SK-N-SH (cell line): ENCODE measurements at regions of chr1 and their contacts with region 1.

Region 1: DNA sequence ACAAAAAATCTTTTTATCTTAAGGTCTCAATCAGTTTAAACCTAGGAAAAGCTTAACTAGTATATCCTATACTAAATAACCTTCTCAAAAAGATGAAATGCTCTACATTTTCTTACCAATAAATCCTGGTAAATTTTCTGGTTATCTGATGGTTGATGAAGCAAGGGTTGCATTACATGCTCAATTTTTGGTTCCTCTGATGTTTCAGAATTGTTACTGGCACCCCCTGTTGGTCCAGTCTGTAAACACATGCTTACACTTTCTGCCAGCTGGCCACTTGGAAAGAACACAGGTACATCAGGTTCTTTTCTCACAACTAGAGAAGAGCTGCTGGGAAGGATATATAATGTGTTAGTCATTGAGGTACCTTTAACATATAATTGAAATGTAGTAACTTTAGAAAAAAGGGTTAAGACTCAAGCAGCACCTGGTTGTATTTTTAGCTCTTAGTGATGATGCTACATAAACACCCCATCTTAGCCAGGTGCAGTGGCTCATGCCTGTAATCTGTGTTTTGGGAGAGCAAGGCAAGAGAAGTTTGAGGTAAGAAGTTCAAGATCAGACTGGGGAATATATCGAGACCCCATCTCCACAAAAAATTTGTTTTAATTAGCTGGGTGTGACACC is 30.9 kb upstream of the TAL1 start:
- DNase-seq: peak; percentile 55
- H3K4me3 ChIP-seq: peak overlapping the region in 1 of 2 experiments; percentile 23; a peak in 1 of 4 replicates
- H3K27ac ChIP-seq: no peak overlapping the region
- H3K4me1 ChIP-seq: no peaks in the 10 kb centered on the region
- H3K27me3 ChIP-seq: no peaks in the 10 kb centered on the region
- CTCF ChIP-seq: peak; percentile 74
- EP300 ChIP-seq: no peak
- RAD21 ChIP-seq: peak; percentile 60

Region 2: GRCh38 chr1:47179017-47179987 is 83.6 kb before region 1 on chr1:
- CTCF ChIA-PET with region 1: interaction called, 59 read pairs
- POLR2A ChIA-PET with region 1: no interaction called
- DNase-seq: peak; percentile 84
- H3K4me3 ChIP-seq: peak overlapping the region; percentile 55 to 77
- H3K27ac ChIP-seq: peak overlapping the region in 1 of 2 experiments; percentile 53; a peak in 2 of 4 replicates
- H3K4me1 ChIP-seq: peaks cover 4 to 16% of the 10 kb centered on the region in 2 experiments; a peak in 1 of 4 replicates
- H3K27me3 ChIP-seq: no peaks in the 10 kb centered on the region
- CTCF ChIP-seq: peak; percentile 94
- EP300 ChIP-seq: no peak
- RAD21 ChIP-seq: peak; percentile 84

Region 3: GRCh38 chr1:47201179-47201578 is 61.7 kb before region 1 on chr1:
- CTCF ChIA-PET with region 1: interaction called, 12 read pairs
- POLR2A ChIA-PET with region 1: no interaction called
- DNase-seq: no peak
- H3K4me3 ChIP-seq: no peak overlapping the region
- H3K27ac ChIP-seq: no peak overlapping the region
- H3K4me1 ChIP-seq: no peaks in the 10 kb centered on the region
- H3K27me3 ChIP-seq: peaks cover 34% of the 10 kb centered on the region
- CTCF ChIP-seq: no peak
- EP300 ChIP-seq: no peak
- RAD21 ChIP-seq: no peak

Region 4: GRCh38 chr1:47241114-47242113 is 21.5 kb before region 1 on chr1:
- CTCF ChIA-PET with region 1: interaction called, 12 read pairs
- POLR2A ChIA-PET with region 1: no interaction called
- DNase-seq: no peak
- H3K4me3 ChIP-seq: no peak overlapping the region
- H3K27ac ChIP-seq: no peak overlapping the region
- H3K4me1 ChIP-seq: no peaks in the 10 kb centered on the region
- H3K27me3 ChIP-seq: peaks cover 4% of the 10 kb centered on the region; the same call in 1 of the 2 replicates
- CTCF ChIP-seq: no peak
- EP300 ChIP-seq: no peak
- RAD21 ChIP-seq: no peak

Region 5: GRCh38 chr1:47280157-47280556 is 17.3 kb after region 1 on chr1:
- CTCF ChIA-PET with region 1: interaction called, 18 read pairs
- POLR2A ChIA-PET with region 1: no interaction called
- DNase-seq: no peak
- H3K4me3 ChIP-seq: no peak overlapping the region
- H3K27ac ChIP-seq: no peak overlapping the region
- H3K4me1 ChIP-seq: no peaks in the 10 kb centered on the region; a peak in 1 of 4 replicates
- H3K27me3 ChIP-seq: no peaks in the 10 kb centered on the region
- CTCF ChIP-seq: no peak
- EP300 ChIP-seq: no peak
- RAD21 ChIP-seq: no peak